ENCODE measurements at regions of chr3 and their contacts with region 1.

Region 1: DNA sequence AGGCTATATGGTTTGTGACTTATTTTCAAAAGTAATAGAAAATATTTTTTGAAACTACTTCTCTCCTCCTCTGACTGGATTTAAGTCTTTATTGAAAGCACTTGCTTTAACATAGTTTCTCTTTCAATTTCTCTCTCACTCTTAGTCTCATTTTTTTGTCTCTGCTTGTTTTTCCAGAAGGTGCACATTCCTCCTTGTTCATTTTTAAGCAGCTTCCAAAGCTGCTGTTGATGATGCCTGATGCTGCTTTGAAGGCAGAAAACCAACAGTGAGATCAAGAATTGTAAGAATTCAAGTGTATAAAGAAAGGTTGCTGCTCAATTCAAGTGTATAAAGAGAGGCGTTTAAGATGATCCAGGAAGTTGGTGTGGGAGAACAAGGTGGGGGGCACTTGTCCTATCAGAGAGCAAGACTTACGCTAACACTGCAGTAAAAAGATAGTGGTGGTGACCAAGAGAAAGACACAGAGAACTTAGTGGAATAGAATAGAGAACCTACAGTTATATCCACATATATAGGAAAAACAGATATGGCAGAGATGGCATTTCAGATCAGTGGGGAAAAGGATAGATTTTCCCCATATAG is 12.1 kb downstream of the NR2C2 start:
- DNase-seq: no peak
- ATAC-seq: no peak
- H3K4me3 ChIP-seq: peak overlapping the region in 1 of 12 donors; percentile 31
- H3K27ac ChIP-seq: peak overlapping the region in 1 of 12 donors; percentile 65
- H3K4me1 ChIP-seq: peaks cover 0 to 47% (median 10%) of the 10 kb centered on the region in 12 donors
- H3K27me3 ChIP-seq: no peaks in the 10 kb centered on the region
- CTCF ChIP-seq: no peak
- POLR2A ChIP-seq: no peak

Region 2: GRCh38 chr3:15007681-15008141 is 48.3 kb after region 1 on chr3:
- intact Hi-C with region 1: loop called in 1 of 10 experiments (anchors 10 kb)
- DNase-seq: no peak
- ATAC-seq: peak; percentile 68 to 89 (median 86)
- H3K4me3 ChIP-seq: no peak overlapping the region
- H3K27ac ChIP-seq: peak overlapping the region in 4 of 12 donors; percentile 20 to 57 (median 42)
- H3K4me1 ChIP-seq: peaks cover 0 to 15% (median 0%) of the 10 kb centered on the region in 12 donors
- H3K27me3 ChIP-seq: no peaks in the 10 kb centered on the region
- CTCF ChIP-seq: no peak
- POLR2A ChIP-seq: no peak

Measured in heart left ventricle (tissue), 16 donors.